ENCODE measurements at regions of chr6 and their contacts with region 1.

Region 1: GRCh38 chr6:89819336-89820130 is at the start of gene MDN1:
- DNase-seq: peak; percentile 89
- H3K4me3 Mint-ChIP-seq: peak within 1 kb of the TSS; percentile 87
- H3K27ac Mint-ChIP-seq: peak within 1 kb of the TSS; percentile 97
- H3K4me1 Mint-ChIP-seq: peaks cover 33% of the 10 kb centered on the region
- H3K27me3 Mint-ChIP-seq: no peaks in the 10 kb centered on the region
- total RNA-seq, gene MDN1: 74.6 and 77.9 TPM in 2 replicates

Region 2: GRCh38 chr6:89122625-89123024 is 696.9 kb before region 1 on chr6:
- intact Hi-C with region 1: no loop called
- DNase-seq: no peak
- H3K4me3 Mint-ChIP-seq: no peak overlapping the region
- H3K27ac Mint-ChIP-seq: no peak overlapping the region
- H3K4me1 Mint-ChIP-seq: no peaks in the 10 kb centered on the region
- H3K27me3 Mint-ChIP-seq: peaks cover 29% of the 10 kb centered on the region

Region 3: DNA sequence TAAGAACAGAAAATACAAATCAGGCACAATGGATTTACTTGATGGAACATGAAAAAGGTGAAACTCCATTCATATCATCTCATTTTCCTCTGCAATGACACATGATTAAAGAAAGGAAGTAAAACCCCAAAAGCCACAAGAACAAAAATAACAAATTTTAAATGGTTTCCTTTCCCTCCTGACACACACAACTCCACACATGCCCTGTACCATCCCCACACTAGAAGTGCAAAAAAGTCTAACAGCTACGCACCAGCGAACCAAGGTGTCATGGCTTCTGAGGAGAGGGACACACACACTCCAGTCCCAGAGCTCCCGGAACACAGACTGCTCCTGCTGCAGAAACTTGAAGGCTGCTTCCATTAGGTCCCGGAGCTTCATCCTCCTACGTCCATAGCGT is 25.2 kb before region 1 on chr6:
- intact Hi-C with region 1: loop called (anchors 1 kb)
- DNase-seq: no peak
- H3K4me3 Mint-ChIP-seq: peak overlapping the region; percentile 62
- H3K27ac Mint-ChIP-seq: peak overlapping the region; percentile 72
- H3K4me1 Mint-ChIP-seq: peaks cover 29% of the 10 kb centered on the region
- H3K27me3 Mint-ChIP-seq: no peaks in the 10 kb centered on the region

Region 4: GRCh38 chr6:89829591-89830385 is 10.3 kb after region 1 on chr6 and contains the start of gene CASP8AP2:
- intact Hi-C with region 1: loop called (anchors 1 kb)
- DNase-seq: peak; percentile 93
- H3K4me3 Mint-ChIP-seq: peak within 1 kb of the TSS; percentile 97
- H3K27ac Mint-ChIP-seq: peak within 1 kb of the TSS; percentile 91
- H3K4me1 Mint-ChIP-seq: peaks cover 23% of the 10 kb centered on the region
- H3K27me3 Mint-ChIP-seq: no peaks in the 10 kb centered on the region
- total RNA-seq, gene CASP8AP2: 38.3 and 40.2 TPM in 2 replicates

Region 5: DNA sequence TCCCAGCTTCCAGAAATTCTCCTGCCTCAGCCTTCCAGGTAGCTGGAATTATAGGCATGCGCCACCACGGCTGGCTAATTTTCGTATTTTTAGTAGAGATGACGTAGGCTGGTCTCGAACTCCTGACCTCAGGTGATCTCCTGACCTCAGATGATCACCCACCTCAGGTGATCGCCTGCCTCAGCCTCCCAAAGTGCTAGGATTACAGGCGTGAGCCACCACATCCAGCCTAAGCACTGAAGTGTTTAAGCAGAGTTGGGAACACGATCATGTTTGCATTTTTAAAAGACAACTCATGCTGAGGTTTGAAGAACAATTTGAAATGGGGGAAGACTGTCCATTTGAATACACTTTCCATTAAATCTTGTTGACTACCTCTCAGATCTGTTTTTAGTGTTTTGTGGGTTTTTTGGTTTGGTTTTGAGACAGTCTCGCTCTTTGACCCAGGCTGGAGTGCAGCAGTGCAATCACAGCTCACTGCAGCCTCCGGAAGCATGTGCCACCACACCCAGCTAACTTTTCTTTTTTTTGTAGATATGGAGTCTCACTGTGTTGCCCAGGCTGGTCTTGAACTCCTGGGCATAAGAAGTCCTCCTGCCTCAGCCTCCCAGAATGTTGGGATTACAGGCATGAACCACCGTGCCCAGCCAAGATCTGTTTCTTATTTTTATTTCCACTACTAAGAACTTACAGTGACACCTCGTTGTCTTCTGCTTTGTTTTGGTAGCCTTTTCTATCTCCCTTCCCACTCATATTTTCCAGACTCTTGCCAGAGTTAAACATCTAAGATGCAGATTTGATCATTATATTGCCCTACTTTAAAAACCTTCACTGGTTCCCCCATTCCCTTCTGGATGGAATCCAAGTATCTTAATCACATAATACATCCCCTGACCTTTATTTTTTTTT is 15.6 kb after region 1 on chr6:
- intact Hi-C with region 1: loop called (anchors 2 kb)
- DNase-seq: peak; percentile 22
- H3K4me3 Mint-ChIP-seq: peak overlapping the region; percentile 15
- H3K27ac Mint-ChIP-seq: peak overlapping the region; percentile 94
- H3K4me1 Mint-ChIP-seq: peaks cover 53% of the 10 kb centered on the region
- H3K27me3 Mint-ChIP-seq: no peaks in the 10 kb centered on the region

Region 6: DNA sequence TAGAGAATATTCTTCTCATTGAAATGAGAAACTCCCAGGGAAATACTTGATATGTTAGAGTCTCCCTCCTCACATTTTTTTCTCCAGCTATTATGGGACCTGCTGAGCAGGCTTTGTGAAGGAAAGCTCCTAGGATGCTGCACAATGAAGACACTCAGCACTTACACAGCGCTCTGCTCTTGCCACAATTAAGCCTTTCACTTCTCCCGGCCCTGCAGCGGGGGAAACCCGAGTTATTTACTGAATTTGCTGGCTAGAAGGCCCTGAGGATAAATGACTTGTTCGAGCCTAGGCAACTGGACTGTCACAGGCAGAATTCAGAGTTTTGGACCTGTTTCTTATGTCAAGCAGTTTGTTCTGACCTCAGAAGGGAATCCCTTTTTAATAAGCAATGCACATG is 665.4 kb after region 1 on chr6:
- intact Hi-C with region 1: no loop called
- DNase-seq: no peak
- H3K4me3 Mint-ChIP-seq: no peak overlapping the region
- H3K27ac Mint-ChIP-seq: no peak overlapping the region
- H3K4me1 Mint-ChIP-seq: peaks cover 18% of the 10 kb centered on the region
- H3K27me3 Mint-ChIP-seq: peaks cover under 1% of the 10 kb centered on the region

Measured in activated T-helper 1 cell treated with anti-CD3 and anti-CD28 coated beads, Interleukin-12 subunit alpha, Interleukin-12 subunit beta, Interleukin-2, Interleukin-4 antibody, amounts not matched to agents 30 ng/mL and 10 ng/mL and 1 ng/mL, durations not matched to agents 14 hours and 24 hours and 36 hours (primary cell).